ENCODE measurements at regions of chr1 and their contacts with region 1.

Region 1: GRCh38 chr1:116485071-116485735 is 85.6 kb downstream of the CD58 start:
- DNase-seq: peak; percentile 71
- ATAC-seq: peak; percentile 92
- H3K4me3 Mint-ChIP-seq: no peak overlapping the region
- H3K27ac Mint-ChIP-seq: no peak overlapping the region
- H3K4me1 Mint-ChIP-seq: peaks cover 12% of the 10 kb centered on the region
- H3K27me3 Mint-ChIP-seq: no peaks in the 10 kb centered on the region
- CTCF ChIP-seq: peak; percentile 31

Region 2: DNA sequence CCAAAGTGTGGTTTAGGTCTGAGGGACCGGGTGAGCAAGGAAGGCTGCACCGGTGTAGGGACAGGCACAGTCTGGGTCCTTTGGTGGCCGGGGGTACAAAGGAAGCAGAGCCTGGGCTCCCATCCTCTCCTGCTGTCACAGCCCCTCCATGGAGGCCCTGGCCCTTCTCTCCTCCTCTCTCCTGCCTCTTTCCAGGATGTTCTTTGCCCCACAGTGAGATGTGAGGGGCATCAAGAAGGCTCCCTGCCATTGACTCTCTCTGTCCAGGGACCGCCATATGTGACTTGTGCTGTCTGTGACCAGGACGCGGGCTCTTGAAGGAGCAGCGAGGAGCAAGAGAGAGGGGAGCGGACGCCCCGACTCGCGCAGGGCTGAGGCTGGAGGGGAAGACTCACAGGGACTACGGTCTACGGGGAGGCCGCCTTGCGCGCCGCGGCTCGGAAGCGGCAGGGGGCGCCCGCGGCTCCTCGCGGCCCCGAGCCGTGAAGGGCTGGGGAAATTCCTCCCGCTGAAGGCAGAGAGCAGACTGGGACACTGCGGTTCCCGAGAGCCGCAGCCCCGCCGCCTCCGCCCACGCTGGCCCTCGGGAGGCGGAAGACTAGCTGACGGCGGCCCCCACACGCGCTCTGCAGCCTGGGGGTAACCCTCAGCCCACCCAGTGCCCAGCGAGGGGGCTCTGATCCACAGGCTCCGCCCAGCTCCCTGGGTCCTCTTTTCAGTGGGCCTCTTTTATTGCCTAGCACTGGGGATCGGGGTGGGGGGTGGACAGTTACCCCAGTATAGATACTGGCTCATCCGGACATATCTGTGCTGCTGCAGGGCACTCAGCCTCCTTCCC is 333.2 kb before region 1 on chr1:
- CTCF ChIA-PET with region 1: interaction called, 44 read pairs
- POLR2A ChIA-PET with region 1: no interaction called
- intact Hi-C with region 1: loop called (anchors 1 kb)
- DNase-seq: peak; percentile 76
- ATAC-seq: peak; percentile 98
- H3K4me3 Mint-ChIP-seq: peak overlapping the region; percentile 66
- H3K27ac Mint-ChIP-seq: peak overlapping the region; percentile 19
- H3K4me1 Mint-ChIP-seq: peaks cover 3% of the 10 kb centered on the region
- H3K27me3 Mint-ChIP-seq: peaks cover 4% of the 10 kb centered on the region
- CTCF ChIP-seq: peak; percentile 38

Region 3: GRCh38 chr1:116232989-116233514 is 252.2 kb before region 1 on chr1:
- CTCF ChIA-PET with region 1: interaction called, 5 read pairs
- POLR2A ChIA-PET with region 1: no interaction called
- intact Hi-C with region 1: loop called (anchors 1 kb)
- DNase-seq: no peak
- ATAC-seq: peak; percentile 70
- H3K4me3 Mint-ChIP-seq: no peak overlapping the region
- H3K27ac Mint-ChIP-seq: no peak overlapping the region
- H3K4me1 Mint-ChIP-seq: peaks cover 12% of the 10 kb centered on the region
- H3K27me3 Mint-ChIP-seq: no peaks in the 10 kb centered on the region
- CTCF ChIP-seq: no peak

Region 4: DNA sequence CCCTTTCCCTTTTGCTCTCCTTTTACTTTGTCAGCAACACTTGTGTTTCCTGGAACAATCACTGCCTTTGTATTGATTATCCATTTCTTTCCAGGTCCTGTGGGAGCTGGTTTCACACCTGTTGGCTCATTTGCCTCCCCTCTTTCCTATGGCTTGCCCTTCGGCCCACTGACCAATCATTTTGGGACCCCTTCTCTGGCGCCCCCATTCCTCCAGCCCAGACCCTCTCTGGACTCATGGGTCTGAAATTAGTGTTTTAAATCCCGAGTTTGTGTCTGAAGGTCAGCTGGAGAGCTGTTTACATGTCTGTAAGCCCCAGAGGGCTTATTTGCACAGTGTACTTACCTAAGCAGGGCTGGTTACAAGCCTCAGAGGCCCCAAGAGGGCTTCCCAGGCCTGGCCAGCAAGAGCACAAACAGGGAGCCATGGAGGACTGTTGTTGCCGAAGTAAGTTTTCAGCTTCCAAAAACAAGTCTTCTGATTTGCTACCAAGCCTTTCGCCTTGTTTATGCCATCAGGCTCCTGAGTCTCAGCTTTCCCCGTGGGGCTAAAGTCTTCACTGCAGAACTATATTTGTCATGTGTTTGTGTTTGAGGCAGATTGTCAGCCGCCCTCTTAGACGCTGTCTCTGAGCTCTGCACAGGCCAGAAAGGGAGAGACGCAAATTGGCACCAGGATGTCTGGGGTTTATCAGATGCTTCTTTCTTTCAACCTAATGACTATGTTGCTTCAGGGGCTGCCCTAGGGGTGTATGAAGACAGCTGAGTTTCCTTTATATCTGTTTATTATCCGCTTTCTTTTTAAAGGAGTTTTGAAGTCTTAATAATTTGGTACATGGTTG is 19.1 kb before region 1 on chr1:
- CTCF ChIA-PET with region 1: interaction called, 13 read pairs
- POLR2A ChIA-PET with region 1: no interaction called
- intact Hi-C with region 1: no loop called
- DNase-seq: no peak
- ATAC-seq: no peak
- H3K4me3 Mint-ChIP-seq: no peak overlapping the region
- H3K27ac Mint-ChIP-seq: no peak overlapping the region
- H3K4me1 Mint-ChIP-seq: no peaks in the 10 kb centered on the region
- H3K27me3 Mint-ChIP-seq: peaks cover 6% of the 10 kb centered on the region
- CTCF ChIP-seq: no peak

Region 5: GRCh38 chr1:116498789-116499628 is 13.8 kb after region 1 on chr1:
- CTCF ChIA-PET with region 1: interaction called, 59 read pairs
- POLR2A ChIA-PET with region 1: no interaction called
- intact Hi-C with region 1: loop called (anchors 1 kb)
- DNase-seq: no peak
- ATAC-seq: peak; percentile 68
- H3K4me3 Mint-ChIP-seq: no peak overlapping the region
- H3K27ac Mint-ChIP-seq: no peak overlapping the region
- H3K4me1 Mint-ChIP-seq: peaks cover 24% of the 10 kb centered on the region
- H3K27me3 Mint-ChIP-seq: no peaks in the 10 kb centered on the region
- CTCF ChIP-seq: no peak

Region 6: DNA sequence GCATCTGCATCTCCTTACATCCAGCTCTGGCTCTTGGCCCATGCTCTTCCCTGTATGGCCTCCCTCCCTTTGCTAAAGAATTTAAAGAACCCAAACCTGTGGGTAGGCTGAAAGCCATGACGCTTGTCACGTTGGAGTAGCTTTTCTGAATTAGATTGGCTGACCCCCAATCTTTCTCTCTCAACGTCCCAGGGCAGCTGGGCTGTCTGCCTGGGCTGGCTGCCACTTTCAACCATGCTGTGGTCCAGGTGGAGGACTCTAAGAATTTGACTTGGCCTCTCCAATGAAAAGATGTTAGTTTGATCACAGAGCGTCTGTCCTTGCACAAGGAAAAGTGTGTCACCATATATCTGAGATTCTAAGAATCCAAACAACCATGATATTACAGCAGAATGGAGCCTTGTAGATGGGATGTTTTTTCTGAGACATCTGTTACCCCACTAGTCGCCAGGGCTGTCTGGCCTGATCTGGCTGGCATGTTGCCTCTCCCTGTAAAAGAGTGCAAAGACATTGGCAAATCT is 188.9 kb after region 1 on chr1:
- CTCF ChIA-PET with region 1: interaction called, 10 read pairs
- POLR2A ChIA-PET with region 1: no interaction called
- intact Hi-C with region 1: no loop called
- DNase-seq: no peak
- ATAC-seq: no peak
- H3K4me3 Mint-ChIP-seq: no peak overlapping the region
- H3K27ac Mint-ChIP-seq: no peak overlapping the region
- H3K4me1 Mint-ChIP-seq: peaks cover 3% of the 10 kb centered on the region
- H3K27me3 Mint-ChIP-seq: peaks cover 23% of the 10 kb centered on the region
- CTCF ChIP-seq: no peak